ENCODE measurements at regions of chr18 and their contacts with region 1.

Region 1: DNA sequence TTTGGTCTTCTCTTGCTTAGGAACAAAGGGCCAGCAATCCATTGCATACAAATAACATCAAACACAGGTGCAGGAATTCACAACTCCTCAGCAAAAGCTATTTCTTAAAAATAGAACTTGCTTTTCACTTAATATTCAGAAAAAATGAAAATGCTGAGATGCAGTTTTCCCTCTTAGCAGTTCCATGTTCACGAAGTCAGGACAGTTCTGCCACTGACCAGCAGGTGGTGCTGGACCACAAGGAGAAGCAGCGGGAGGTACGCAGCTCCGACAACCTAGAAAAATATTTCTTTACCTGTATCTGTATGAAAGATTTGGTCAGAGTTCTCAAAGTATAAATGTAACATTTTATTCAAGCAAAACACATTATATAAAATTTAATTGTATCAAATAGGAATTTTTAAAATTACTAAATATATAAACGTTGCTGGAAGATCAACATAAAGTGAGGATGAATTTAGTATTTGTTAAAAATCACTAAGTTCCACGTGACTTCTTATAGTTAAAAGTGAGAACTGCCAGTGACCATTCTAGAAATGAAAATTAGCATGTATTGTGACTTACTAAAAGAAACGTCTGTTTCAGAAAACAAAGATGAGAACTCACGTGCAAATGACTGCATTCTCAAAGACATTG is 48.8 kb downstream of the ADNP2 start:
- DNase-seq: peak; percentile 48 to 83 (median 79)
- ATAC-seq: peak; percentile 77
- H3K4me3 ChIP-seq: no peak overlapping the region
- H3K4me3 Mint-ChIP-seq: no peak overlapping the region
- H3K27ac ChIP-seq: no peak overlapping the region
- H3K27ac Mint-ChIP-seq: no peak overlapping the region
- H3K4me1 ChIP-seq: no peaks in the 10 kb centered on the region
- H3K4me1 Mint-ChIP-seq: peaks cover 3% of the 10 kb centered on the region
- H3K27me3 ChIP-seq: peaks cover 0 to 3% of the 10 kb centered on the region in 2 experiments
- H3K27me3 Mint-ChIP-seq: peaks cover 9% of the 10 kb centered on the region
- CTCF ChIP-seq: peak; percentile 100

Region 2: GRCh38 chr18:79988451-79989194 is 169.2 kb before region 1 on chr18 and contains the start of gene TXNL4A:
- CTCF ChIA-PET with region 1: no interaction called
- POLR2A ChIA-PET with region 1: no interaction called
- intact Hi-C with region 1: loop called in 1 of 2 experiments (anchors 5 kb)
- DNase-seq: peak; percentile 67 to 95 (median 83)
- ATAC-seq: peak; percentile 95
- H3K4me3 ChIP-seq: peak within 1 kb of the TSS; percentile 74 to 97
- H3K4me3 Mint-ChIP-seq: peak within 1 kb of the TSS; percentile 90
- H3K27ac ChIP-seq: peak within 1 kb of the TSS; percentile 91 to 98
- H3K27ac Mint-ChIP-seq: peak within 1 kb of the TSS; percentile 96
- H3K4me1 ChIP-seq: peaks cover 40% of the 10 kb centered on the region
- H3K4me1 Mint-ChIP-seq: peaks cover 43% of the 10 kb centered on the region
- H3K27me3 ChIP-seq: no peaks in the 10 kb centered on the region
- H3K27me3 Mint-ChIP-seq: no peaks in the 10 kb centered on the region
- CTCF ChIP-seq: no peak
- total RNA-seq, gene TXNL4A: 62.0 to 69.0 TPM

Region 3: DNA sequence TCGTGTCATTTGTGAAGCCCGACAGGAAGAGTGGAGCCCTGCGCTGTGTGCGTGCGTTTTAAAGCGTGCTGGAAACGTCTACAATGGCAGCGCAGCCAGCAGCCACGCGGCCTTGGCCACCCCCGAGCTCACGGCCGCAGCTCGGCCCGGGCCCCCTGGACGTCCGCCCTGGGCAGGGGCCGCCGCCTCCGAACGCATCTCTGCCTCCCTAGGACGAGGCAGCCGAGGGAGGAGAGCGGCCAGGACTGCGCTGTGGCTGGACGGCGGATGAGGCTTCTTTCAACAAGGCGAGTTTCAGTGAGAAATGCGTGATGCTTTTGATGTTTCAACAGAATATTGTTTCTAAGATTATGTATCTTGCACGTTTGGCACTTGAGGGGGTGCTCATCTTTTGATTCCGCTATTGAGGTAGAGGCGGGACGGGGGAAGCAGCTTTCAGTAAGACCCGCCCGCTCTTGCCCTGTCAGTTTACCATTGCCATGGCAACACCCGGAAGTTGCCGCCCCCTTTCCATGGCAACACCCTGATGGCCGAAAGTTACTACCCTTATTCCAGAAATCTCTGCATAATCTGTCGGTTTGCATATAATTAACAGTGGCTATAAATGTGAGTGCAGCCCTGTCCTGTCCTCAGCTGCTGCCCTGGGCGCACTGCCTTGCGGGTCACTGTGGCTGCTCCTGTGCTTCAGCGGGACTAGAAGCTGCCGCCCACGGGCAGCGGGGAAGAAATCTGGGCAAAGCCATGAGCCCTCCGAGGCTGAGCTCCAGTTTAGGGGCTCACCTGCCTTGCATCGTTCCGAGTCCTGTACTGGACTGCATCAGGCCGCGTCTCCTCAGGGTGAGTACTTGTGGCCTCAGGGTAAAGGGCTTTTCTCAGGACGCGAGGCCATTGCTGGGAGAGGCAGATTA is 10.2 kb before region 1 on chr18:
- CTCF ChIA-PET with region 1: interaction called, 24 read pairs
- POLR2A ChIA-PET with region 1: no interaction called
- intact Hi-C with region 1: no loop called
- DNase-seq: peak; percentile 52 to 85 (median 76)
- ATAC-seq: peak; percentile 88
- H3K4me3 ChIP-seq: peak overlapping the region; percentile 53 to 61
- H3K4me3 Mint-ChIP-seq: peak overlapping the region; percentile 83
- H3K27ac ChIP-seq: peak overlapping the region in 1 of 2 experiments; percentile 31
- H3K27ac Mint-ChIP-seq: no peak overlapping the region
- H3K4me1 ChIP-seq: peaks cover 11% of the 10 kb centered on the region
- H3K4me1 Mint-ChIP-seq: peaks cover 21% of the 10 kb centered on the region
- H3K27me3 ChIP-seq: no peaks in the 10 kb centered on the region
- H3K27me3 Mint-ChIP-seq: peaks cover 7% of the 10 kb centered on the region
- CTCF ChIP-seq: no peak

Region 4: GRCh38 chr18:80183273-80184050 is 25.6 kb after region 1 on chr18:
- CTCF ChIA-PET with region 1: interaction called, 13 read pairs
- POLR2A ChIA-PET with region 1: no interaction called
- intact Hi-C with region 1: no loop called
- DNase-seq: no peak
- ATAC-seq: no peak
- H3K4me3 ChIP-seq: no peak overlapping the region
- H3K4me3 Mint-ChIP-seq: no peak overlapping the region
- H3K27ac ChIP-seq: no peak overlapping the region
- H3K27ac Mint-ChIP-seq: no peak overlapping the region
- H3K4me1 ChIP-seq: no peaks in the 10 kb centered on the region
- H3K4me1 Mint-ChIP-seq: no peaks in the 10 kb centered on the region
- H3K27me3 ChIP-seq: no peaks in the 10 kb centered on the region
- H3K27me3 Mint-ChIP-seq: no peaks in the 10 kb centered on the region
- CTCF ChIP-seq: no peak